ENCODE measurements at regions of chr6 and their contacts with region 1.

Region 1: GRCh38 chr6:33112148-33112547 is 36.4 kb downstream of the HLA-DPB1 start:
- DNase-seq: no peak
- ATAC-seq: peak; percentile 94
- H3K4me3 Mint-ChIP-seq: peak overlapping the region; percentile 76
- H3K27ac Mint-ChIP-seq: peak overlapping the region; percentile 73
- H3K4me1 Mint-ChIP-seq: peaks cover 53% of the 10 kb centered on the region
- H3K27me3 Mint-ChIP-seq: peaks cover 3% of the 10 kb centered on the region
- CTCF ChIP-seq: no peak

Region 2: DNA sequence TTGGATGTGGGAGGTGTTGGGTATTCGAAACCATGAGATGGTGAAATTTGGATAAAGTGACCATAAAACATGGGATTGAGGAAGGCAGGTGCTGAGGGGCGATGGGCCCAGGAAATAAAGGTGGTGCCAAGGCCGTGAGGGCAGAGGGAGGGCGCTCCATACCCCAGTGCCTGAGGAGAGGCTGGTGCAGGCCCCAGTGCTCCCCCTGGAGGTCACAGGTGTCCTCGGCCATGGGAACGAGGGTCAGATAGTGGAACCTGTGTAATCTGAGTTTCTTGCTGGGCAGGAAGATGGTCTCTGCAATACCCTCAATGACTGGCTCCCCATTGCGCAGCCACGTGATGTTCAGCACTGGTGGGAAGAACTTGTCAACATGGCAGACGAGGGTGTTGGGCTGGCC is 20.2 kb before region 1 on chr6:
- CTCF ChIA-PET with region 1: no interaction called
- POLR2A ChIA-PET with region 1: interaction called, 10 read pairs
- intact Hi-C with region 1: no loop called
- DNase-seq: no peak
- ATAC-seq: peak; percentile 75
- H3K4me3 Mint-ChIP-seq: no peak overlapping the region
- H3K27ac Mint-ChIP-seq: peak overlapping the region; percentile 79
- H3K4me1 Mint-ChIP-seq: peaks cover 47% of the 10 kb centered on the region
- H3K27me3 Mint-ChIP-seq: no peaks in the 10 kb centered on the region
- CTCF ChIP-seq: no peak

Measured in activated B cell treated with CpG ODN at 0.5 μM for 24 hours (primary cell).